ENCODE measurements at regions of chr2 and their contacts with region 1.

Region 1: DNA sequence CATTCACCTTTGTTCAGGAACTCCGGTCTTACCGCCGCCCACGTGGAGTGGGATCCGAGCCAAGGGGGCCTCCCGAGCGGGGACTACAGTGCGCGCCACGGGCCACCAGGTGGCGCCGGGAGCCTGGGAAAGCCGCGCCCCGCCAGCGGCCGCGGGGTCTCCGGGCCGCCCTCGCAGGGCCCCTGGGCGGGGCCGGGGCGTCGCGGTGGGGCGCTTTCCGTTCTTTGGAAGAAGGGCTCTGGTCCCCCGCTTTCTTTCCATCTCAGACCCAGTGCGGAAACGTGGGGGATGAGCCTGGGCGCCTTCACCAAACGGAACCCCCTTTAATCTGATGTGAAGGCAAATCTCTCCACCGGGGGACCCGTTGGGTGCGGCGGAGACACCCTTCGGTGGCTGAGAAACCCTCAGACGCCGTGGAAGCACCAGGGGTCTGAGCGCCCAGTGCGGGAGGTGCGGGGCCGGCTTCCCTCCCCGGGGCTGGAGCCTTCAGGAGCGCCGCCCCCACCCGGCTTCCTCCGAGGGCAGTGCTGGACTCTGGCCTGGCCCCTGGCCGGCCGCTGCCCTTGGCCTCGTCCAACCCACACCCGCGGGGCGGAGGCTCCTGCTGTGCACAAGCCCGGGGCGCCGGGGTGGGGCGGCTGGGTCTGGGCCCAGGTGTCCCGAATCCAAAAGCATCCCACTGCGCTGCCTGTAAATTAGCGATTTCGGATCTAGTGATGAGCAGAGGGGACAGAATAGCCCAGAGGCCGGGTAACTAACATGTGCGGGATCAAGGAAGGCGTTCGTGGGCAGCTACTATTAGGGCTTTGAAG is 44.6 kb downstream of the GORASP2 start:
- DNase-seq: peak; percentile 94
- H3K4me3 ChIP-seq: peak overlapping the region; percentile 79 to 90 (median 82)
- H3K27ac ChIP-seq: peak overlapping the region; percentile 83 to 89 (median 86)
- H3K4me1 ChIP-seq: peaks cover 5 to 21% (median 10%) of the 10 kb centered on the region in 4 donors
- H3K27me3 ChIP-seq: no peaks in the 10 kb centered on the region
- CTCF ChIP-seq: peak; percentile 98 to 99 (median 98)
- EP300 ChIP-seq: no peak
- POLR2A ChIP-seq: no peak

Region 2: DNA sequence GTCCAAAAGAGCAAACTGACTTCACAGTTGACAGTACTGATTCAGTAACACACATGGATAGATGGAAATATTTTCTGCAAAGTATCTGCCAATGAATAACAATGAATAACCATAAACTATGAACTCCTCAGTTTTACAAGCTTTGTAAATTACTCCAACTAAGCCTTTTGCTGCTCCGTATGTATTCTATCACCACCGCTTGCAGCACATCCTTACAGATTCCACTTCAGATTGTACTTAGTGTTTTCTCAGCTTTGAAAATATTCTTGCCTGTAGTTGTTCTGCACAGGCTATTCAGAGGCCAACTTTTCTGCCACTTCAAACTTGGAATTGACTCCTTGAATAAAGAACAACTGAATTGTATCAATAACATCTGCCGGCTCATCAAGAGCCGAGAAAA is 150.8 kb after region 1 on chr2:
- intact Hi-C with region 1: no loop called
- DNase-seq: no peak
- H3K4me3 ChIP-seq: no peak overlapping the region
- H3K27ac ChIP-seq: no peak overlapping the region
- H3K4me1 ChIP-seq: peaks cover 0 to 28% (median 24%) of the 10 kb centered on the region in 4 donors
- H3K27me3 ChIP-seq: no peaks in the 10 kb centered on the region
- CTCF ChIP-seq: no peak
- EP300 ChIP-seq: no peak
- POLR2A ChIP-seq: no peak

Region 3: DNA sequence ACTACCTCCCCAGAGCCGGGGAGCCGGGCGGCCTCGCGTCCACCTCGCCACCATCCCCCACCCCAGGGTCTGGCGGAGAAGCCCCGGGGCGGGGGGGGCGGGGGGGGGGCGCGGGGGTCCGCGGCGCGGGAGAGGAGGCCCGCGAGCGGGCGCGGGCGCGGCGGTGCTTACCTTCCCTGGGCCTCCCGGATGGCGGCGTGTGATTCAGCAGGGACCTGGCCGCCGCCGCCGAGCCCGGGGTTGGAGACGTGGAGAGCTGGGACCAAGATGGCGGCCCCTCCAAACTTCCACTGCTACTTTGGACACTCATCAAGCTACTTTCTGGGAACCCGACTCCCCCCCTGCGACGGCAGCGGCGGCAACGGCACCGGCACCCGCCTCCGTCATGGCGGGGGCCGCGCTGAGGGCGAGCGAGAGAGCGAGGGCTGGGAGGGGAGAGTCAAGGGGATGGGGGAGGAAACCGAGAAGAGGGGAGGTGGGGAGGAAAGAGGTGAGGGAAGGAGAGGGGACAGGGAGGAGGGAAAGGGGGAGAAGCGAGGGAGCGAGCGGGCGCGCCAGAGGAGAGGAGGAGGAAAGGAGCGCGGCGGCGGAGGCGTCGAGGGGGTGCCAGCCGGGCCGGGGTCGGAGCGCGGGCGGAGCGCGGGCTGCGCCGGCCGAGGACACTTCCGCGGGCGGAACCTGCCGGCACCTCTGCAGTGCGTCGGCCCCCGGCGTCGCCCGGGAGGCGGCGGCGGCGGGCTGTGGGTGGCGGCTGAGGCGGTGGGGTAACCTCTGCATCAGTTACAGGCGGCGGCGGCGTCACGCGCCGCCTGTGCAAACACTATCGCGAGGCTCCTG is 186.6 kb after region 1 on chr2 and contains the start of gene TLK1:
- intact Hi-C with region 1: loop called (anchors 2 kb)
- DNase-seq: peak; percentile 94
- H3K4me3 ChIP-seq: peak within 1 kb of the TSS; percentile 73 to 94 (median 90)
- H3K27ac ChIP-seq: peak within 1 kb of the TSS; percentile 95 to 98 (median 96)
- H3K4me1 ChIP-seq: peaks cover 9 to 45% (median 41%) of the 10 kb centered on the region in 4 donors
- H3K27me3 ChIP-seq: no peaks in the 10 kb centered on the region
- CTCF ChIP-seq: no peak
- EP300 ChIP-seq: no peak
- POLR2A ChIP-seq: no peak
- total RNA-seq, gene TLK1: 27.9 to 46.1 (median 34.0) TPM

Region 4: DNA sequence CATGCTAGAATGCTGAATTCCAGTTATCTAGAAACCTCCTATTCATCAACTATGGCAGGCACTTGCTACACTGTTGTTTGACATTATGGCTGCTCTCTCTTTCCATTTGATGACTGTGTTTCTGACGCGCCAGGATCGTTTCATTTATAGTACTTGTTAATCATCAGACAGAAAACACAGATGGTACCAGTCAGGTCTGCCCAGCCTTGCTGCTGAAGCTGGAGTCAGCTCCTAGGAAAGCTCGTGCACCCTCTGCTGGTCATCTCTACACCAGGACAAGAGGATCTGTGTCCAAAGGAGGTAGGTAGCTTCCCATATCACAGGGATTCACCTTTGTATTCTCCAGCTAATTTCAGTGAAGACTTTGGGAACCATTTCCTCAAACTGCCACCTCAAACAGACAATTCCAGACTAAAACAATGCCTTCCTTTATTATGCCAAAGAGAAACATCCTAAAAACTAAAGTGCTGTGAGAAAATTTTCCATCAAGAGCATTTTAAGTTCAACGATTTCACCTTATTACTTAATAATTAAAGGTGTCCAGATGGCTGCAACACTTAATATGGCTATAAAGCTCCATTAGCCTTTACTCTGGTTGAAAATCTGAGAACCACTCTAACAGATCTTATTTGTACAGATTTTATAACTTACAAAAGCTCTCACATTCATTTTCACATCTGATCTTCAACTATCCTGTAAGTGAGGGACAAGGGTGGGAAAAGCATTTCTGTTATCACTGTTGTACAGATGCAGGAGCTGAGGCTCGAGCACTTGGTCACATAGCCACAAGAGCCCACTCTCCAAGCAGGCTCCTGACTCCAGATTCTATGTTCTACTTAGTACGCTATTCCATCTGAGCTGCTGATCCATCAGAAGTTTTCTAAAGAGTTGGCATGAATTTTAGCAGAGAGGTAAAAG is 442.6 kb after region 1 on chr2:
- intact Hi-C with region 1: loop called (anchors 2 kb)
- DNase-seq: peak; percentile 93
- H3K4me3 ChIP-seq: peak overlapping the region in 1 of 4 donors; percentile 10
- H3K27ac ChIP-seq: peak overlapping the region; percentile 56 to 72 (median 63)
- H3K4me1 ChIP-seq: peaks cover 4 to 30% (median 20%) of the 10 kb centered on the region in 4 donors
- H3K27me3 ChIP-seq: no peaks in the 10 kb centered on the region
- CTCF ChIP-seq: peak; percentile 82 to 90 (median 86)
- EP300 ChIP-seq: no peak
- POLR2A ChIP-seq: no peak

Region 5: GRCh38 chr2:171433763-171434670 is 460.3 kb after region 1 on chr2 and contains the starts of genes DCAF17 and METTL8:
- intact Hi-C with region 1: loop called (anchors 5 kb)
- DNase-seq: peak; percentile 97
- H3K4me3 ChIP-seq: peak within 1 kb of the TSS; percentile 69 to 87 (median 76)
- H3K27ac ChIP-seq: peak within 1 kb of the TSS; percentile 93 to 98 (median 94)
- H3K4me1 ChIP-seq: peaks cover 10 to 49% (median 40%) of the 10 kb centered on the region in 4 donors
- H3K27me3 ChIP-seq: no peaks in the 10 kb centered on the region
- CTCF ChIP-seq: peak; percentile 8 to 30 (median 21)
- EP300 ChIP-seq: no peak
- POLR2A ChIP-seq: peak; percentile 14
- total RNA-seq, gene DCAF17: 12.0 to 22.8 (median 14.3) TPM
- total RNA-seq, gene METTL8: 22.1 to 43.3 (median 31.5) TPM

Region 6: GRCh38 chr2:171522052-171522787 is 548.5 kb after region 1 on chr2 and contains the start of gene CYBRD1:
- intact Hi-C with region 1: loop called (anchors 5 kb)
- DNase-seq: peak; percentile 95
- H3K4me3 ChIP-seq: peak within 1 kb of the TSS; percentile 84 to 98 (median 93)
- H3K27ac ChIP-seq: peak within 1 kb of the TSS; percentile 88 to 94 (median 92)
- H3K4me1 ChIP-seq: peaks cover 12 to 43% (median 29%) of the 10 kb centered on the region in 4 donors
- H3K27me3 ChIP-seq: no peaks in the 10 kb centered on the region
- CTCF ChIP-seq: no peak
- EP300 ChIP-seq: no peak
- POLR2A ChIP-seq: peak; percentile 60
- total RNA-seq, gene CYBRD1: 133 to 281 (median 197) TPM